MCF 10A (cell line): ENCODE measurements at regions of chr11 and their contacts with region 1.

Region 1: DNA sequence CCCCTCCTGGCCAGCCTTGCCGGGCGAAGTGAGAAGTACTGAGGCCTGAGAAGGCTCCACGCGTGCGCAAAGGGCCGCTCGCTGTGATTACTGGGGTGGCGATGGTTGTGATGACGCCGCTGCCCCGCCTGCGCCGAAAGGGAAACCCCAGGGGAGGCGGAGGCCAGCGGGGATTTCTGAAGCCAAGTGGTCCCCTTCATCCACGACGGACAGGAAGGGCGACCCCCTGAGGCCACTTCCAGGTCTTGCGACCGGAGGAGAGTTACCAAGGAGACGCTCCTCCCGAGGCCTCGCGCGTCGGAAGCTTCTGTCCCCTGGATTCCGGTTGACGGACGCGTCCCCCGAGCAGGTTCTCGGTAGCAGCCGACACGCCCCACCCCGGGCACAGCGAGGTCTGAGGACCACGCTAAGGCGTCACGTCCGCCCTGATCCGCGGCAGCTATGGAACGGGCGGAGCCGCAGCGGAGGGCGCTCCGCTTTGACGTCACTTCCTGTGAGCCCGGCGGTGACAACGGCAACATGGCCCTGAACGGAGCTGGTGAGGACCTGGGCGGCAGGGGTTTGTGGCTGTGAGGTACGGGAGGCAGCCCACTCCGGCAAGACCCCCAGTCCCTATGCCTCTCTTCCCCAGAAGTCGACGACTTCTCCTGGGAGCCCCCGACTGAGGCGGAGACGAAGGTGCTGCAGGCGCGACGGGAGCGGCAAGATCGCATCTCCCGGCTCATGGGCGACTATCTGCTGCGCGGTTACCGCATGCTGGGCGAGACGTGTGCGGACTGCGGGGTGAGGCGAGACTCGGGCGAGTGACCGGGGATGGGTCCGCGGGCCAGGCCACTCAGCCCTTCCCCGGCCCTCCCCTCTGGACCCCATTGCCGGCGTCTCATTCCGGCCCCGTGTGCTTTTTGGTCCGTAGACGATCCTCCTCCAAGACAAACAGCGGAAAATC is at the start of gene ZNRD2:
- DNase-seq: peak; percentile 97
- H3K4me3 Mint-ChIP-seq: peak within 1 kb of the TSS; percentile 97
- H3K27ac Mint-ChIP-seq: peak within 1 kb of the TSS; percentile 96
- H3K4me1 Mint-ChIP-seq: peaks cover 31% of the 10 kb centered on the region
- H3K27me3 Mint-ChIP-seq: no peaks in the 10 kb centered on the region
- CTCF ChIP-seq: peak; percentile 41
- total RNA-seq, gene ZNRD2: 65.4 and 68.5 TPM in 2 replicates

Region 2: GRCh38 chr11:65410936-65411688 is 159.1 kb before region 1 on chr11:
- CTCF ChIA-PET with region 1: no interaction called
- POLR2A ChIA-PET with region 1: no interaction called
- intact Hi-C with region 1: no loop called
- DNase-seq: no peak
- H3K4me3 Mint-ChIP-seq: no peak overlapping the region
- H3K27ac Mint-ChIP-seq: no peak overlapping the region
- H3K4me1 Mint-ChIP-seq: no peaks in the 10 kb centered on the region
- H3K27me3 Mint-ChIP-seq: no peaks in the 10 kb centered on the region
- CTCF ChIP-seq: no peak

Region 3: DNA sequence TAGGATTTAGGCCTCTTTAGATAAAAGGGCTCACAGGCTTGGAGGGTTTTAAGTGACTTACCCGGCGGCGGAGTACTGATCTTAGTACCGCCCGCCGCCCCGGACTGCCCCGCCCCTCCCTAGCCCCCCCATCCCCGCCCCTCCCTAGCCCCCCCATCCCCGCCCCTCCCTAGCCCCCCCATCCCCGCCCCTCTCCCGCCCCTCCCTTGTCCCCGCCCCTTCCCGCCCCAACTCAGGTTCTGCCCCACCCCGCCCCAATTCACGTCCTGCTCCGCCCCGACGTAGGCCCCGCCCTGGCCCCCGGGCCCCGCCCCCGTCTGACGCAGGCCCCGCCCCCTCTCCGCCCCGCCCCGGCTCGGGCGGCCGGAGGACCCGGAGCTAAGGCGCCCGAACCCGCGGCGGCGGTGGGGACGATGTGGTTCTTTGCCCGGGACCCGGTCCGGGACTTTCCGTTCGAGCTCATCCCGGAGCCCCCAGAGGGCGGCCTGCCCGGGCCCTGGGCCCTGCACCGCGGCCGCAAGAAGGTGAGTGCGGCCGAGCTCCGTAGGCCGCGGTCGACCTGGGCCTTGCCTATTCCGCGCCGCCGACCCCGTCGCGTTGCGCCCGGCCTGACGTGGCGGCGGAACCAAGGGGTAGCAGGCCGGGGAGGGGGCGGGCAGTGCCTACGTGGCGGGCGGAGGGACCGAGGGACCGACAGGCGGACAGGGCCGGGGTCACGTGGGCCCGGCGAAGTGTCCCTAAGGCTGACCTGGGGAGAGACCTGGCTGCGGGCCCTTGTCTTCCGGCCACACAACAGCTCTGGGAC is 45.3 kb before region 1 on chr11 and contains the start of gene SCYL1:
- CTCF ChIA-PET with region 1: interaction called, 6 read pairs
- POLR2A ChIA-PET with region 1: interaction called, 12 read pairs
- intact Hi-C with region 1: no loop called
- DNase-seq: peak; percentile 71
- H3K4me3 Mint-ChIP-seq: peak within 1 kb of the TSS; percentile 88
- H3K27ac Mint-ChIP-seq: peak within 1 kb of the TSS; percentile 90
- H3K4me1 Mint-ChIP-seq: peaks cover 10% of the 10 kb centered on the region
- H3K27me3 Mint-ChIP-seq: no peaks in the 10 kb centered on the region
- CTCF ChIP-seq: no peak
- total RNA-seq, gene SCYL1: 70.9 and 75.5 TPM in 2 replicates

Region 4: DNA sequence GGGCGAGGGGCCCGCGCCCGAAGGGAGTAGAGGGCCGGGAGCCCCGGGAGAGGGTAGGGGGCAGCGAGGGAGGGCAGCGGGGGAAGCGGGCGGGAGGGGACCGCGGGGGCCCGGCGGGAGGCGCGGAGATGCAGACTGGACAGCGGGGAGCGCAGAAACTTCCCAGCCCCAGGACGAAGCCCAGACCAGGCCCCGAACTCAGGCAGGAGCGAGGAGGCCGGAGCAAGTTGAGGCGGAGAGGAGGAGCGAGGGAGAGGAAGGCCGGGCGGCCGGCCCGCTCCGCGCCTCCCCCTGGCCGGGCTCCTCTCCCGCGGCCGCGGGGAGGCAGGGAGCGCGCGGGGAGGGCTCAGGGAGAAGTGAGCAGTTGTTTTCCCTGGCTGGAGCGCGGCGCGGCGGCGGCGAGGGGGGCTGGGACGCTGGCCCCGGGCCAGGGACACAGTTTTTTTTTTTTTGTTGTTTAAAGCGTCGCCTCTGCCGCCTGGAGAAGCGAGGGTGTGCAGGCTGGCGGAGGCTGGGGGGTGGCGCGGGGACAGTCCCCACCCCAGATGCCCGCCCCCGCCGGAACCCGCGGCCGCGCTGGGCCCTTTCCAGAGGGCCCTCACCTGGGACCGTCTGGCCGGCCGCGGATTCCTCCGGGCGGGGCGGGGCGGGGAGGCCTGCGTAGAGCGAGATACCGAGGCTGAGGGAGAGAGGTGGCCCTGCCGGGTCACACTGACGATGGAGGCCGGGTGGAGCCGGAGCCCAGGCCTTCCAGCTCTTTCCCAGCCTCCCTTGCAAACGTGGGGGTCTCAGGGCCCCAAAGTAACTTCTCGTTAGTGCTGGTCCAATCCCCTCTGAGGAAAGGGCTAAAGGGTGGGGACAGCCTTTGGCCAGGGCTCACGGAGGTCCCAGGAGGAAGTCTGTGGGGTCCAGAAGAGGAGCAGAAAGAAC is 12.0 kb before region 1 on chr11 and contains the start of gene LTBP3:
- CTCF ChIA-PET with region 1: interaction called, 35 read pairs
- POLR2A ChIA-PET with region 1: interaction called, 24 read pairs
- intact Hi-C with region 1: no loop called
- DNase-seq: peak; percentile 87
- H3K4me3 Mint-ChIP-seq: peak within 1 kb of the TSS; percentile 66
- H3K27ac Mint-ChIP-seq: no peak within 1 kb of the TSS
- H3K4me1 Mint-ChIP-seq: peaks cover 47% of the 10 kb centered on the region
- H3K27me3 Mint-ChIP-seq: no peaks in the 10 kb centered on the region
- CTCF ChIP-seq: no peak
- total RNA-seq, gene LTBP3: 10.6 and 11.0 TPM in 2 replicates

Region 5: DNA sequence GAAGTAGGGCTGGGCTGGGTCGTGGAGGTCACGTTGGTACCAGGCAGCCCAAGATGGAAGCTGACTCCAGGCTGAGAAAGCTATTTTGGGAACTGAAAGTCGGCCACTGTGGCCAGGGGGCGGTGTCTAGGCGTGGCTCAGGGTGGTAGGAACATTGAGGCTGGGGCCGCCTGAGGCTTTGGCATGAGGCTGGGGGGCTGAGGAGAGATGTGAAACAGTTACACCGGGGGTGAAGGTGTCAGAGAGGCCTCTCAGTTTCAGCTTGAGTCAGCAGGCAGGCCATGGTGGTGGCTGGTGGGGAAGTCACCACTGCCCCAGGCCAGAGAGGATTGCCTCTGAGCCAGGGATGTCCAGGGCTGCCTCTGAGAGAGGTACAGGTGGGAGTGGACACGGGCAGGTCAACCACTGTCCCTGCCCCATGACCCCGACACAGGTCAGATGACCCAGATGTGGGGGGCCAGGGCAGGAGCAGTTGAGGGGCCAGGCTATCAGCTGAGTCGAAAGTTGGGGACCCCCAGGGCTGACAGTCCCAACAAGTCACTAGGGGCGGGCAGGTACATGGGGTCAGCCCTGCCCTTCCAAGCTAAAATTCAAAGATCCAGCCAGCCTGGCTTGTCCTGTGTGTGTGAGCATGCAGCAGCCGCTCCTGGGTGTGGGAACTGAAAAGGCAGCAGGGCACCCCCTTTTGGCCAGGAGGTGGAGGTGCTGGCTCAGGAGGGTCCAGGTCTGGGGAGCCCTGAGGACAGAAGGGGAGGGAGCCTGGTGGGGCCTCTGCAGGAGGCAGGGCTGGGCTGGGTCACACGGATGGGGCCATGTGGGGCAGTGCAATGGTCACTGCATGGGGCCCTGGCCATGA is 18.2 kb after region 1 on chr11:
- CTCF ChIA-PET with region 1: interaction called, 10 read pairs
- POLR2A ChIA-PET with region 1: interaction called, 18 read pairs
- intact Hi-C with region 1: loop called (anchors 1 kb)
- DNase-seq: peak; percentile 71
- H3K4me3 Mint-ChIP-seq: no peak overlapping the region
- H3K27ac Mint-ChIP-seq: peak overlapping the region; percentile 74
- H3K4me1 Mint-ChIP-seq: peaks cover 15% of the 10 kb centered on the region
- H3K27me3 Mint-ChIP-seq: no peaks in the 10 kb centered on the region
- CTCF ChIP-seq: peak; percentile 64

Region 6: GRCh38 chr11:65593518-65594298 is 23.5 kb after region 1 on chr11:
- CTCF ChIA-PET with region 1: interaction called, 10 read pairs
- POLR2A ChIA-PET with region 1: interaction called, 18 read pairs
- intact Hi-C with region 1: loop called (anchors 1 kb)
- DNase-seq: no peak
- H3K4me3 Mint-ChIP-seq: no peak overlapping the region
- H3K27ac Mint-ChIP-seq: no peak overlapping the region
- H3K4me1 Mint-ChIP-seq: peaks cover 5% of the 10 kb centered on the region
- H3K27me3 Mint-ChIP-seq: no peaks in the 10 kb centered on the region
- CTCF ChIP-seq: peak; percentile 56

Region 7: GRCh38 chr11:65615229-65615941 is 45.1 kb after region 1 on chr11 and contains the start of gene PCNX3:
- CTCF ChIA-PET with region 1: interaction called, 11 read pairs
- POLR2A ChIA-PET with region 1: interaction called, 103 read pairs
- intact Hi-C with region 1: no loop called
- DNase-seq: peak; percentile 100
- H3K4me3 Mint-ChIP-seq: peak within 1 kb of the TSS; percentile 91
- H3K27ac Mint-ChIP-seq: peak within 1 kb of the TSS; percentile 96
- H3K4me1 Mint-ChIP-seq: peaks cover 26% of the 10 kb centered on the region
- H3K27me3 Mint-ChIP-seq: no peaks in the 10 kb centered on the region
- CTCF ChIP-seq: no peak
- total RNA-seq, gene PCNX3: 40.9 and 45.8 TPM in 2 replicates

Region 8: GRCh38 chr11:65662799-65663638 is 92.8 kb after region 1 on chr11 and contains the start of gene RELA:
- CTCF ChIA-PET with region 1: no interaction called
- POLR2A ChIA-PET with region 1: interaction called, 17 read pairs
- intact Hi-C with region 1: no loop called
- DNase-seq: peak; percentile 91
- H3K4me3 Mint-ChIP-seq: peak within 1 kb of the TSS; percentile 74
- H3K27ac Mint-ChIP-seq: peak within 1 kb of the TSS; percentile 73
- H3K4me1 Mint-ChIP-seq: peaks cover 12% of the 10 kb centered on the region
- H3K27me3 Mint-ChIP-seq: no peaks in the 10 kb centered on the region
- CTCF ChIP-seq: no peak
- total RNA-seq, gene RELA: 82.1 and 83.0 TPM in 2 replicates